Activated CD4-positive, alpha-beta T cell treated with anti-CD3 and anti-CD28 coated beads for 36 hours (primary cell): ENCODE measurements at regions of chr9 and their contacts with region 1.

Region 1: DNA sequence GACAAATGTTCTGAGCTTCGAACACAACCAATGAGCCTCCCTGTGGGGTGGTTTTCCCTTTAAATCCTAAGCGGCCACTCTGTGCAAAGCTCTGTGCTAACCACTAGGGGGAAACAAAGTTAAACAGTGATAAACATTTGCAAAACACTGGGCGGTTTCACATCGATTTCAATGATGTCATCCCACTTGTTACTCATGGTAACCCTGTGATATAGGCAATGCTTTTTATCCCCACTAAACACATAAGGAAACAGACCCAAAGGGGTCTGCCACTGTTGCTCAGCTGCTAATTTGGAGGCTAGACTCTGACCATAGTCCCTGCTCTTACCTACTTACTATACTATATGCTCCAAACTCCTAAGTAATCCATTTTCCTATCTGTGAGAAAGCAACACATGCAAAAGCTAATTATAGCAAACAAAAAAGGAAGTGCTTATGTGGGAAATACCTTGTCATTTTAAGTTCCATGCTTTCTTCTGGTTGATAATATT is 57.3 kb downstream of the PTPN3 start:
- DNase-seq: peak; percentile 74
- ATAC-seq: peak; percentile 99
- H3K4me3 Mint-ChIP-seq: no peak overlapping the region
- H3K27ac Mint-ChIP-seq: no peak overlapping the region
- H3K4me1 Mint-ChIP-seq: peaks cover 15% of the 10 kb centered on the region
- H3K27me3 Mint-ChIP-seq: peaks cover 13% of the 10 kb centered on the region

Region 2: DNA sequence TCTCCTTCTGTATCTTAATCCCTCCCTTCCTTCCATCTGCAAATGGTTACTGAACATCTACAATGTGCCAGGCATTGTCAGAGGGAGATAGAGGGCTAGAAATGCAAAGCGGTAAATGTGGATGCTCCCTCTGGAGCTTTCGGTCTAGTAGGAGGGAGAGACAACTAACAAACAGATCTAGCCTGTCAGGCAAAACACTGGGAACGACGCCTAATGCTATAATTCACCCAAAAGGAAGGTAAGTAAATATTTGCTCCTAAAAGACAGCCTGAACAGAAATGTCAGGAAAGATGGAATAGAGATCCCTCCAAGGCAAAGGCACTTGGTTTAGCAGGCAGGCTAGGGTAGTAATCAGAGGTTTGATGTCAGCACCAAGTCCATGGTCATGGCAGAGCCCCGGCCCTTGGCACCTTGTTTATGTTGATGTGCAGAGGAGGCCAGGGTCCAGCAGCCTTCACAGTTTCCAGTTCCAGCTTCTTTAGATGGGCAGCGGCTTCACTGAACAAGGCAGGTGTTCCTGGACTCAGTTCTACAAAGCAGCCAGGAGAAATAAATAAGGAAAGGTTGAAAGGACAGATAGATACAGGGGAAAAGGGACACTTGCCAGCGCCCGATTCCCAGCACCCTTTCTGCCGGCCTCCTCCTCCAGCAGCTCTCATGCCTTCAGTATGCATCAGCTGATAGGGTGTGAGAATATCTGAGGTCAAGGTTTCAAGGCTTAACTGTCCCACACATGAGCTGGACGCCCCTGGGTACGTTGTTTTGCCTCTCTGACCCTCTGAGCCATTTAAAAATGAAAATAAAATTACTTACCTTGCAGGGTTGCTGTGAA is 227.3 kb before region 1 on chr9:
- CTCF ChIA-PET with region 1: no interaction called
- POLR2A ChIA-PET with region 1: no interaction called
- intact Hi-C with region 1: no loop called
- DNase-seq: no peak
- ATAC-seq: no peak
- H3K4me3 Mint-ChIP-seq: no peak overlapping the region
- H3K27ac Mint-ChIP-seq: no peak overlapping the region
- H3K4me1 Mint-ChIP-seq: no peaks in the 10 kb centered on the region
- H3K27me3 Mint-ChIP-seq: peaks cover 14% of the 10 kb centered on the region

Region 3: DNA sequence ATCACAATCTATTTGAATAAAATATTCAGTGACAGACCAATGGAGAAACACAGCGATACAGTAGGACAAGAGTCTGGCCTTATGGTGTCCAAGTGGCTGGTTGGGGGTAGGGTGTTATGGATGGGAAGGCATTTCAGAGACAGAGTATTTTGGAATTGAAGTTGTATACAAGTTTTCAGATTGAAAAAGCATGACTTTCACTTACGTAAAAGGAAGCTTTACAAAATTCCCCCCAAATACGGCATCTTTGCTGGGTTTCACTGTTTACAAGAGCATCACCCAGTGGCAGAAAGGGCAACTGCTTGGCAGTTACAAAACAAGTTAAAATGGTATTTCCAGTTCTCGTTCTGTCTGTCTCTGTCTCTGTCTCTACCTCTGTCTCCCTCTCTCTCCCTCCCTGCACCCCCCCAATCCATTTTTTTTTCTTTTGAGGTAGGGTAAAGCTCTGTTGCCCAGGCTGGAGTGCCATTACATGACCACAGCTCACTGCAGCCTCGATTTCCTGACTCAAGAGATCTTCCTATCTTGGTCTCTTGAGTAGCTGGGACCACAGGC is 29.0 kb before region 1 on chr9:
- CTCF ChIA-PET with region 1: interaction called, 6 read pairs
- POLR2A ChIA-PET with region 1: no interaction called
- intact Hi-C with region 1: loop called in 1 of 2 experiments (anchors 2 kb)
- DNase-seq: peak; percentile 66
- ATAC-seq: peak; percentile 57
- H3K4me3 Mint-ChIP-seq: no peak overlapping the region
- H3K27ac Mint-ChIP-seq: peak overlapping the region; percentile 67
- H3K4me1 Mint-ChIP-seq: peaks cover 42% of the 10 kb centered on the region
- H3K27me3 Mint-ChIP-seq: peaks cover 17% of the 10 kb centered on the region

Region 4: DNA sequence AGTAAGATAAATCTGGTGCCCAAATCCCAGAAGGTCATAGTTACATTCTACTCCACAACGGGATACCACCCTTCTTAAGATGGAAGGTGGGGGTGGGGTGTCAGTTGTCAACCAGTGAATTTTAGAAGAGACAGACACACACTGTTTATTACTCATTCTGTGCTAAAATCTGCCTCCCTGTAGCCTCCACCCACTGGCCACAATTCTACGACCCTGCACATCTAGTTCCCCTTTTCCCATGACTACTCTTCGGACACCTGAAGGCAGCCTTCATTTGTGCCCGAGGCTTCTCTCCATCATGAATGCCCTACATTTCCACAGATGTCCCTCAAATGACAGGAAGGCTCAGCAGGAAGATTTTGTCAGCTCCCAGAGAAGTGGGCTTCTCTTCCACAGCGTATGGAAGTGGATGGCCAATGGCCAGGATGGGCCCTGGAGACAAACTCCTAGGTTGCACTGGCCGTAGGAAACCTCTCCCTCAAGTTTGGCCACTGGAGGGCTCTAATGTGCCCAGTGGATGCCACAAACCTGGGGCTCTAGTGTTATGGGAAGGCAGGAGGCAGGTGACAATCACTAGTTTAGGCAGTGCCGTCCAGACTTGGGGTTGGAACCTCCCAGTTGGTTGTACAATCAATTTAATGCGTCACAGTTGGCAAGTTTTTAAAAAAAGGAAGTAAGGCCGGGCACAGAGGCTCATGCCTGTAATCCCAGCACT is 10.6 kb after region 1 on chr9:
- CTCF ChIA-PET with region 1: interaction called, 14 read pairs
- POLR2A ChIA-PET with region 1: no interaction called
- intact Hi-C with region 1: no loop called
- DNase-seq: no peak
- ATAC-seq: no peak
- H3K4me3 Mint-ChIP-seq: no peak overlapping the region
- H3K27ac Mint-ChIP-seq: no peak overlapping the region
- H3K4me1 Mint-ChIP-seq: peaks cover 18% of the 10 kb centered on the region
- H3K27me3 Mint-ChIP-seq: peaks cover 10% of the 10 kb centered on the region

Region 5: GRCh38 chr9:109469646-109470358 is 29.0 kb after region 1 on chr9:
- CTCF ChIA-PET with region 1: interaction called, 80 read pairs
- POLR2A ChIA-PET with region 1: no interaction called
- intact Hi-C with region 1: loop called (anchors 1 kb)
- DNase-seq: peak; percentile 85
- ATAC-seq: peak; percentile 97
- H3K4me3 Mint-ChIP-seq: no peak overlapping the region
- H3K27ac Mint-ChIP-seq: no peak overlapping the region
- H3K4me1 Mint-ChIP-seq: peaks cover 8% of the 10 kb centered on the region
- H3K27me3 Mint-ChIP-seq: peaks cover 11% of the 10 kb centered on the region

Region 6: GRCh38 chr9:109817846-109818472 is 377.1 kb after region 1 on chr9:
- CTCF ChIA-PET with region 1: no interaction called
- POLR2A ChIA-PET with region 1: no interaction called
- intact Hi-C with region 1: loop called in 1 of 2 experiments (anchors 2 kb)
- DNase-seq: peak; percentile 67
- ATAC-seq: peak; percentile 71
- H3K4me3 Mint-ChIP-seq: no peak overlapping the region
- H3K27ac Mint-ChIP-seq: no peak overlapping the region
- H3K4me1 Mint-ChIP-seq: no peaks in the 10 kb centered on the region
- H3K27me3 Mint-ChIP-seq: peaks cover 16% of the 10 kb centered on the region